Colonic mucosa (tissue), 4 donors: ENCODE measurements at regions of chr14 and their contacts with region 1.

Region 1: DNA sequence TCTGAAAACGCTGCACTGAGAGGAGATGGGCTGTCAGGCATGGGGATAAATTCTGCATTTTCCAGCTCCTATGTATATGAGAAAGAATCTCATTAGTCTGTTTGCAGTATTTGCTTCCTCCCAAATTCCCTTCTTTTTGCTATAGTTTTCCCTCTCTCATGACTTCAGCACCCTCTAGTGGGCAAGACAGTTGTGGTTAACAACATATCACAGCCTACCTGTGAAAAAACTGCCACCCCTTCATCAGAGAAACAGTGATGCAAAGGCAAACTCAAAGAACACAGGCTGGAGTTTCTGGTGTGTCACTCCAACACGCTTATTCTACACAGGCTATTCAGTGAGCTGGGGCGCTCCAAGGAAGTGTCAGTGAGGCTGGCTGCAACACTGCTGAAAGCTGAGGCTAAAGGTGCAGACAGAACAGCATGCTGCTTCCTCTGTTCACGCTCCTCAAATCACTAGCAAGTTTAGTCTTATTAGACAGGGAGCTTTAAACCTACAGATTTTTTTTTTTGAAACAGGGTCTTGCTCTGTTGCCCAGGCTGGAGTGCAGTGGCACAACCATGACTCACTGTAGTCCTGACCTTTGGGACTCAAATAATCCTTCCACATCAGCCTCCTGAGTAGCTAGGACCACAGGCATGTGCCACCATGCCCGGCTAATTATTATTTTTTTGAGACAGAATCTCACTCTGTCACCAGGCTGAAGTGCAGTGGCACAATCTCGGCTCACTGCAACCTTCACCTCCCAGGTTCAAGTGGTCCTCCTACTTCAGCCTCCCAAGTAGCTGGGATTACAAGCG is 19.3 kb downstream of the ZC2HC1C start:
- DNase-seq: peak; percentile 72
- H3K4me3 ChIP-seq: no peak overlapping the region
- H3K27ac ChIP-seq: no peak overlapping the region
- H3K4me1 ChIP-seq: no peaks in the 10 kb centered on the region
- H3K27me3 ChIP-seq: no peaks in the 10 kb centered on the region
- CTCF ChIP-seq: peak; percentile 61

Region 2: DNA sequence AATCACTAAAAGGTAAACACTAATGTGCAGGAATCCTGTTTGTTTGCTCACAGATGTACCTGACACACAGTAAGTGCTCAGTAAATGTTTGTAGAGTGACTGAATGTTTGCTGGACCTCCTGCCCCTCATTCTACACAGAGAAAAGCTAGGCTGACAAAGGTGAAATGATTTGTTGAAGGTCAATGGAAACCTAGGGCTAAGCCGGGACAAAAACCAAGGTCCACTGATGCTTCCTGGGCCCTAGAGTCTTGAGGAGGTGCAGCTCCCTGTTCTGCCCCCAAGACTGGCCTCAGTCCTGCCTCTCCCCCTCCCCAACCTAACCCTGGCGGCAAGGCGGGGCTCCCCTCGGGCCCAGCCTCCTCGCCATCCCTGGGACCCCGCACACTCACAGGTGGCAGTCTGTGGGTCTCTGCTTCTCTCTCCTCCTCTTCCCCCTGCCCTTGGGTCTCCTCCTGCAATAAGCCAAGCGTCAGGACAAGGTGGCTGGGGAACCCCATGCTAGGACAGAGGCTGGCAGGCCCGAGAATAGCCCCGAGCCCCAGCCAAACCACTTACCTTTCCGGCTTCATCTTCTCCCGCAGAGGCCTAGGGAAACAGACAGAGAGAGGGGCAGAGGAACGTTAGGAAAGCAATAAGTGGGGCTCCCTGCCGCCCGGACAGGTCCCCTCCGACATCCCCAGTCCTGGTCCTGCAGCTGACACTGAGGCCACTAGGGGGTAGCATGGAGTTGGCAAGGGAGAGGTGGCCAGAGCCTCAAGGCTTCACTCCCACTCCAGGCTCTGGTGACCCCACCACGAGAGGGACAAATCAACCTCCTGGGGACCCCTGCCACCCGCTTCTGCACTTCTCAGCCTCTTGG is 142.7 kb before region 1 on chr14:
- intact Hi-C with region 1: loop called (anchors 2 kb)
- DNase-seq: peak; percentile 87
- H3K4me3 ChIP-seq: no peak overlapping the region
- H3K27ac ChIP-seq: no peak overlapping the region
- H3K4me1 ChIP-seq: peaks cover under 1% of the 10 kb centered on the region
- H3K27me3 ChIP-seq: no peaks in the 10 kb centered on the region
- CTCF ChIP-seq: peak; percentile 88

Region 3: GRCh38 chr14:75063407-75064213 is 25.2 kb before region 1 on chr14 and contains the start of gene ACYP1:
- intact Hi-C with region 1: no loop called
- DNase-seq: peak; percentile 97
- H3K4me3 ChIP-seq: peak within 1 kb of the TSS; percentile 86
- H3K27ac ChIP-seq: peak within 1 kb of the TSS; percentile 42
- H3K4me1 ChIP-seq: no peaks in the 10 kb centered on the region
- H3K27me3 ChIP-seq: no peaks in the 10 kb centered on the region
- CTCF ChIP-seq: no peak
- total RNA-seq, gene ACYP1: 13.4 to 28.5 TPM